Posterior vena cava (tissue), 2 donors: ENCODE measurements at regions of chr5 and their contacts with region 1.

Region 1: GRCh38 chr5:81450940-81451339 is 57.0 kb upstream of the ACOT12 start:
- DNase-seq: no peak

Region 2: GRCh38 chr5:81506900-81507588 is 56.1 kb after region 1 on chr5:
- intact Hi-C with region 1: loop called in 1 of 2 experiments (anchors 2 kb)
- DNase-seq: no peak